Gastrocnemius medialis (tissue), 4 donors: ENCODE measurements at regions of chr2 and their contacts with region 1.

Region 1: GRCh38 chr2:47867205-47867604 is 39.1 kb downstream of the FBXO11 start:
- DNase-seq: no peak
- ATAC-seq: peak; percentile 57 to 75
- H3K4me3 ChIP-seq: no peak overlapping the region
- H3K27ac ChIP-seq: peak overlapping the region; percentile 32 to 64 (median 42)
- H3K4me1 ChIP-seq: peaks cover 29 to 50% of the 10 kb centered on the region in 2 donors
- H3K27me3 ChIP-seq: no peaks in the 10 kb centered on the region
- CTCF ChIP-seq: no peak
- POLR2A ChIP-seq: no peak

Region 2: DNA sequence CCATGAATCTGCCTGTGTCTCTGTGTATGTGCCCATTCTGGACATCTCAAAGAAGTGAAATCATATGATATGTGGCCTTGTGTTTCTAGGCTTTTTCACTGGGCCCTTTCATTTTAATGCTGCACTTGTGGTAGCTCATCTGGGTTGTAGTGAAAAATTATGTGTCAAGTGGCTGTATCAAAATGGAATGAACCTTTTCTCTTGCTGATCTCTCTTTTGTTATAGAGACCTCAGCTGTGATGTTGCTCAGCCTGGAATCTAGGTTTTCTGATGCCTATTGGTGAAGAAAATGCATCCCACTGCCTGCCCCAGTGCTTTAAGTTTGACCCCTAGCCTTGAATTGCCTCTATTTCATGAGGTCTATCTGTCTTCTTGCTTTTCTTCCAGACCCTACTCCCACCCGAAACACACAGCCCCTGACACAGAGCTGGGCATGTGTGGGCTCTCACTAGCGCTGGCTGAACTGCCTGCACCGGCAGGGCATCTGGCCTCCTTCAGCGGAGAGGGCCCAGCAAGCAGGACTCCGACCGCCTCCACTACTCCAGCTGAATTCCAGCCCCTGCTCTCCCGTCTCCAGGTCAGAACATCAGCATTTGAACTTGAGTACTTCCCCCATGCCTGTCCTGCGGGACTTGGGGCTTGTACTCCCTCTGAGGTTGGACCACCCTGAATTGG is 260.1 kb before region 1 on chr2:
- in situ Hi-C with region 1: no loop called
- intact Hi-C with region 1: no loop called
- DNase-seq: no peak
- ATAC-seq: no peak
- H3K4me3 ChIP-seq: no peak overlapping the region
- H3K27ac ChIP-seq: no peak overlapping the region
- H3K4me1 ChIP-seq: no peaks in the 10 kb centered on the region
- H3K27me3 ChIP-seq: no peaks in the 10 kb centered on the region
- CTCF ChIP-seq: no peak
- POLR2A ChIP-seq: no peak

Region 3: DNA sequence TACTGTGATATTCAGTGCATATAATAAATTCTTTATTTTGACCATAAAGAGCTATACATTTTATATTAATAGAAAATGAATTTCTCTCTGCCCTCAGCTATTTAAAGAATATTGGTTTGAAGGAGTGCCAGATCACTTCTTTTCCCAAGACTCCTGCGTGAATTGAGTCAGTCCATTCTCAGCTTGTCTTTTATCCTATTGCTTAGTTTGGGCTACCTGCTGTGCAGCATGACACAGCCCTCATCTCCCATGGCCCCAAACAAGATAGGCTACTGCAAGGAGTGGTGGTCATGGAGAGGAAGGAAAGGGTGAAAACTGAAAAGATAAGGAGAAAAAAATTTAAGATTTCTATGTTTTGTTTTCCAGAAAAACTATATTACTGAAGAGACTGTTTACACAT is 49.2 kb after region 1 on chr2:
- in situ Hi-C with region 1: no loop called
- intact Hi-C with region 1: no loop called
- DNase-seq: no peak
- ATAC-seq: no peak
- H3K4me3 ChIP-seq: no peak overlapping the region
- H3K27ac ChIP-seq: no peak overlapping the region
- H3K4me1 ChIP-seq: no peaks in the 10 kb centered on the region
- H3K27me3 ChIP-seq: no peaks in the 10 kb centered on the region
- CTCF ChIP-seq: no peak
- POLR2A ChIP-seq: no peak

Region 4: GRCh38 chr2:47935071-47935470 is 67.9 kb after region 1 on chr2:
- in situ Hi-C with region 1: no loop called
- intact Hi-C with region 1: no loop called
- DNase-seq: no peak
- ATAC-seq: no peak
- H3K4me3 ChIP-seq: no peak overlapping the region
- H3K27ac ChIP-seq: no peak overlapping the region
- H3K4me1 ChIP-seq: no peaks in the 10 kb centered on the region
- H3K27me3 ChIP-seq: no peaks in the 10 kb centered on the region
- CTCF ChIP-seq: no peak
- POLR2A ChIP-seq: no peak

Region 5: GRCh38 chr2:48287976-48288375 is 420.8 kb after region 1 on chr2:
- in situ Hi-C with region 1: no loop called
- intact Hi-C with region 1: no loop called
- DNase-seq: no peak
- ATAC-seq: no peak
- H3K4me3 ChIP-seq: no peak overlapping the region
- H3K27ac ChIP-seq: no peak overlapping the region
- H3K4me1 ChIP-seq: peaks cover 3 to 18% of the 10 kb centered on the region in 2 donors
- H3K27me3 ChIP-seq: no peaks in the 10 kb centered on the region
- CTCF ChIP-seq: no peak
- POLR2A ChIP-seq: no peak

Region 6: GRCh38 chr2:48420512-48421197 is 553.5 kb after region 1 on chr2:
- in situ Hi-C with region 1: loop called in 2 of 4 experiments (anchors 25 kb)
- intact Hi-C with region 1: no loop called
- DNase-seq: peak; percentile 52 to 77
- ATAC-seq: peak; percentile 89 to 96
- H3K4me3 ChIP-seq: peak overlapping the region in 1 of 4 donors; percentile 27
- H3K27ac ChIP-seq: no peak overlapping the region
- H3K4me1 ChIP-seq: peaks cover 0 to 1% of the 10 kb centered on the region in 2 donors
- H3K27me3 ChIP-seq: no peaks in the 10 kb centered on the region
- CTCF ChIP-seq: peak; percentile 92 to 95 (median 95)
- POLR2A ChIP-seq: no peak